Activated naive CD8-positive, alpha-beta T cell treated with anti-CD3 and anti-CD28 coated beads, Interleukin-2, amount 10 ng/mL, durations not matched to agents 7 days and 5 days (primary cell): ENCODE measurements at regions of chr16 and their contacts with region 1.

Region 1: GRCh38 chr16:67480833-67481560 is at the start of gene ATP6V0D1:
- DNase-seq: peak; percentile 100
- ATAC-seq: peak; percentile 89
- H3K4me3 Mint-ChIP-seq: peak within 1 kb of the TSS; percentile 93
- H3K27ac Mint-ChIP-seq: peak within 1 kb of the TSS; percentile 98
- H3K4me1 Mint-ChIP-seq: peaks cover 14% of the 10 kb centered on the region
- H3K27me3 Mint-ChIP-seq: no peaks in the 10 kb centered on the region
- total RNA-seq, gene ATP6V0D1: 41.8 to 48.8 TPM

Region 2: DNA sequence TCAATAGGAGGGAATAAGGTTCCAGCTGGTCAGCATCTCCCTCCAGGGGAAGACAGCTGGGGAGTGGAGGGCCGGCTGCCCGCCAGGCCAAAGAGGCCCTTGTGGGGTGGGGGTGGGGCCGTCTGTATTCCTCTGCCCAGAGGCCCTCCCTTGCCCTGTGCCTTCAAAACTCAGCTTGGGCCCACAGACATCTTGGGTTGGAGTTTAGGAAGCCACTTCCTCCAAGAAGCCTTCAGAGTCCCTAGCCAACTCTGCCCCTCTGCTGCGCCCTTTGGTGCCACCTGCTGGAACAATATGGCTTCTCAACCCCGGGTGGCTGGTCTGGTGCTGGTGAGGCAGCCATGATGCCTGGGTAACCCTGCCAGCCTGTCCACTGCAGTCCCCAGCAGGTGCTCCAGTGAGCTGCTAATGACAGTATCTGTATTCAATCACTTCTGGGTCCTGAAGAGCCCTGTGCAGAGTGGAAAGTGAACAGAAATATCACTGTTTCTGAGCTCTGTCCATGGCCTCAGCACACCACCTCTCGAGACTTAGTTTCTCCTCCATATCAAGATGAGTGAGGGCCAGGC is 33.4 kb before region 1 on chr16:
- POLR2A ChIA-PET with region 1: no interaction called
- DNase-seq: peak; percentile 76
- ATAC-seq: peak; percentile 74
- H3K4me3 Mint-ChIP-seq: no peak overlapping the region
- H3K27ac Mint-ChIP-seq: no peak overlapping the region
- H3K4me1 Mint-ChIP-seq: no peaks in the 10 kb centered on the region
- H3K27me3 Mint-ChIP-seq: no peaks in the 10 kb centered on the region

Region 3: GRCh38 chr16:67514382-67514828 is 33.4 kb after region 1 on chr16:
- POLR2A ChIA-PET with region 1: interaction called, 14 read pairs
- DNase-seq: peak; percentile 70
- ATAC-seq: peak; percentile 76
- H3K4me3 Mint-ChIP-seq: no peak overlapping the region
- H3K27ac Mint-ChIP-seq: peak overlapping the region; percentile 79
- H3K4me1 Mint-ChIP-seq: peaks cover 22% of the 10 kb centered on the region
- H3K27me3 Mint-ChIP-seq: no peaks in the 10 kb centered on the region

Region 4: GRCh38 chr16:67667817-67668494 is 187.0 kb after region 1 on chr16:
- POLR2A ChIA-PET with region 1: interaction called, 12 read pairs
- DNase-seq: peak; percentile 81
- ATAC-seq: peak; percentile 91
- H3K4me3 Mint-ChIP-seq: peak overlapping the region; percentile 93
- H3K27ac Mint-ChIP-seq: no peak overlapping the region
- H3K4me1 Mint-ChIP-seq: peaks cover 9% of the 10 kb centered on the region
- H3K27me3 Mint-ChIP-seq: no peaks in the 10 kb centered on the region